Heart left ventricle (tissue), 16 donors: ENCODE measurements at regions of chr17 and their contacts with region 1.

Region 1: GRCh38 chr17:13337864-13338371 is 263.8 kb downstream of the HS3ST3A1 start:
- DNase-seq: peak in 2 of 5 donors; percentile 20 to 23
- ATAC-seq: peak; percentile 20 to 57 (median 42)
- H3K4me3 ChIP-seq: peak overlapping the region in 10 of 12 donors; percentile 14 to 50 (median 42)
- H3K27ac ChIP-seq: peak overlapping the region in 3 of 12 donors; percentile 12 to 61 (median 22)
- H3K4me1 ChIP-seq: peaks cover 0 to 5% (median 0%) of the 10 kb centered on the region in 12 donors
- H3K27me3 ChIP-seq: peaks cover 0 to 3% (median 0%) of the 10 kb centered on the region in 9 donors
- CTCF ChIP-seq: peak; percentile 54 to 81 (median 71)
- POLR2A ChIP-seq: no peak

Region 2: DNA sequence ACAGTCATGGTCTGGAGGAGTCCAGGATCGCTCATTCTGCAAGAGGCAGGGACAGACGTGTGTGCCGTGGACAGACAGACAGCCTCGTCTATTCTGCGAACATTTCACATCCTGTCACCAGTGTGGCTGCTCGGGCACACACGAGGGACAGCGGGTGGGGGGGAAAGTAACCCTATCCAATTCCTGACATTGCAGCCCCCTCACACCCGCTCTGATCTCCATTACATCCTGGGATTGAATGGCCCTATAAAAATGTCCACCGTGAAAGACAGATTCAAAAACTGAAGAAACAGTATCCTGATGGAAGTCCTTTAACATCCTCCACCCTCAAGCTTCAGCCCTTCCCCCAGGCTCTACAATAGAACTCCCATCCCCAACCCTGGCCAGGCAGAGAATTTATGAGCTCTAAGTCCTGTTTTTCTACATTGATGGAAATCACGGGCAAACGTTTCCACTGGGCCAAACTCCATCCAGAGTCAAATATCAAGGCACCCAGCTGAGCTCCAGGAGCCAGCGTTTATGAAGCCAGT is 224.4 kb after region 1 on chr17:
- intact Hi-C with region 1: loop called in 2 of 10 experiments (anchors 10 kb)
- DNase-seq: peak in 2 of 5 donors; percentile 51 to 54
- ATAC-seq: no peak
- H3K4me3 ChIP-seq: no peak overlapping the region
- H3K27ac ChIP-seq: no peak overlapping the region
- H3K4me1 ChIP-seq: no peaks in the 10 kb centered on the region
- H3K27me3 ChIP-seq: no peaks in the 10 kb centered on the region
- CTCF ChIP-seq: no peak
- POLR2A ChIP-seq: no peak

Region 3: DNA sequence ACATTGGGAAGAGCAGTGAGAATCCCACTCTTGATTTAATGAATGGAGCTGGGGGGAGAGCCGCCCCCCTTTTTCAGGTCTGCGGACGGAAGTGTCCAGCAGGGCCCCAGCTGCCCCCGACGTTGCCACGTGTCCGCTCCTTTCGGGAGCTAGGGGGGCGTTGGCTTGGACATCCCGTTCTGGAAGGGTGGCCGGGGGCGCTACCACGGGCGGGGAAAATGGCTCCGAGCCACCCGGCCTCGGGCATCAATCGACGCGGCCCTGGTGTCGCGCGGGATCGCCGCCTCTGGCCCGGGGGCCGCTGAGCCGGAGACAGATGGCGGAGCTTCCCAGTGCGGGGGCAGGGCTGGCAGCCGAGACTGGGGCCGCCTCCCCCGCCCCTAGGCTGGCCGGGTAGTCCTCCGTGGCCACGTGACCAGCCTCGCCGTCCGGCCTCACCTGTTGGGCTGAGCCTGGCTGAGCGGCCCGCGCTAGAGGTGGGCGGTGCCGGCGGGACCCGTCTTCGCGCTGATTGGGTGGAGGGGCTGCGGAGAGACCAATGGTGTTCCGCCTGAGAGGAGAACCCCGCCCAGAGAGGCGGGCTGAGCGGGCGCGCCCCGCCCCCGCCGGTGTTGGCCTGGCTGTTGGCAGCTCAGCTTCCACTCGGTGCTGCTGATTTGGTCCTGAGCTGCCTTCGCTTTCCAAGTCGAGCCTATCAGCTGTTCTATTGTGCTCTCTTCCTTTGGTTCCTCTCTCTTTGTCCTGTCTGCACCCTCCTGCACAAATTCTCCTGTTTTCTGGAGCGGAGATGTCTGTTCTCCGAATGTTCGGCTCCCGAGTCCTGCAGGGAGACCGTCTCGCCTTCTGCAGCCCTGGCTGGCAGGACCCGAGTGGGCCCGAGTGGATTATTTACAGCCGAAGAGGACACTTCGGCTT is 971.3 kb after region 1 on chr17:
- intact Hi-C with region 1: loop called in 8 of 10 experiments (anchors 5 to 10 kb)
- DNase-seq: peak; percentile 90 to 95 (median 93)
- ATAC-seq: peak; percentile 98 to 100 (median 100)
- H3K4me3 ChIP-seq: peak overlapping the region; percentile 42 to 71 (median 58)
- H3K27ac ChIP-seq: peak overlapping the region in 11 of 12 donors; percentile 19 to 74 (median 47)
- H3K4me1 ChIP-seq: peaks cover 0 to 53% (median 29%) of the 10 kb centered on the region in 12 donors
- H3K27me3 ChIP-seq: peaks cover 0 to 49% (median 12%) of the 10 kb centered on the region in 9 donors
- CTCF ChIP-seq: no peak
- POLR2A ChIP-seq: peak in 1 of 2 donors; percentile 62